ENCODE measurements at regions of chr12 and their contacts with region 1.

Region 1: GRCh38 chr12:51430231-51430906 is 5.7 kb downstream of the SLC4A8 start:
- DNase-seq: no peak
- H3K4me3 ChIP-seq: no peak overlapping the region
- H3K27ac ChIP-seq: peak overlapping the region in 3 of 4 donors; percentile 19 to 31 (median 29)
- H3K4me1 ChIP-seq: peaks cover 0 to 9% (median 0%) of the 10 kb centered on the region in 4 donors
- H3K27me3 ChIP-seq: no peaks in the 10 kb centered on the region
- CTCF ChIP-seq: no peak
- EP300 ChIP-seq: no peak
- POLR2A ChIP-seq: no peak

Region 2: GRCh38 chr12:51188359-51189051 is 241.9 kb before region 1 on chr12:
- in situ Hi-C with region 1: no loop called
- intact Hi-C with region 1: no loop called
- DNase-seq: no peak
- H3K4me3 ChIP-seq: no peak overlapping the region
- H3K27ac ChIP-seq: no peak overlapping the region
- H3K4me1 ChIP-seq: no peaks in the 10 kb centered on the region
- H3K27me3 ChIP-seq: no peaks in the 10 kb centered on the region
- CTCF ChIP-seq: no peak
- EP300 ChIP-seq: no peak
- POLR2A ChIP-seq: no peak

Region 3: DNA sequence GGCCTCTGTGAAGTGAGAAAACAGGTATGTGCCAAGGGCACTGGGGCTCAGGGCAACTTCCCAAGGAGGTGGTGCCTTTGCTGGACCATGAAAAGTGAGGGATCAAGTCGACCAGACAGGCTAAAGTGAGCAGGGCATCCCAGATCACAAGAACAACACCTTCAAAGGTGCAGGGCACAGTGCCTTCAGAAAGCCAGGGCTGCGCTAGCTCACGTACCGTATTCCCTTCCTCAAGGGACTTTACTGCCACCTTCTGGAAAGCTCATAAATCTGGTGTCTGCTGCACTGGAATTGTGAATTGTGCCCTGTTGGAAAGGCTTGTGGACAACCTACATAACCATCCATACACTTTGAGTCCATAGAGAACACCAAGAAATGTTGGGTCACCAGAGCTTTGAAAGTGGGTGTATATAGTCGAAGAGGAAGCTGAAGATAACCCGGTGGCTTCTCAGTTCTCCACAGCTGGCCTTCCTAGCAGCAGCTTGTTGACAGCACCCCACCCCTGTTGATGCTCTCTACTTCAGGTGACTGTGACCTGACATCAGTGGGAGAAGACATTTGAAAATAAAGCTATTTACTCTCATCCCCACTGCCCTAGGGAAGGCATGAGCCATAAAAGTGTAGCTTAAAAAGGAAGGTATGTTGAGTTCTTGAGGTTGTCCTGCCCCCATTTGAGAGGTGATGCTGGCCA is 393.7 kb after region 1 on chr12:
- in situ Hi-C with region 1: loop called in 3 of 4 experiments (anchors 10 kb)
- intact Hi-C with region 1: no loop called
- DNase-seq: peak; percentile 34
- H3K4me3 ChIP-seq: no peak overlapping the region
- H3K27ac ChIP-seq: no peak overlapping the region
- H3K4me1 ChIP-seq: peaks cover 4 to 22% (median 11%) of the 10 kb centered on the region in 4 donors
- H3K27me3 ChIP-seq: peaks cover 4% of the 10 kb centered on the region
- CTCF ChIP-seq: peak; percentile 8 to 46 (median 43)
- EP300 ChIP-seq: no peak
- POLR2A ChIP-seq: no peak